Activated naive CD4-positive, alpha-beta T cell treated with anti-CD3 and anti-CD28 coated beads for 36 hours (primary cell): ENCODE measurements at regions of chr11 and their contacts with region 1.

Region 1: GRCh38 chr11:107858217-107859070 is at the start of gene SLC35F2:
- DNase-seq: peak; percentile 77
- H3K4me3 Mint-ChIP-seq: peak within 1 kb of the TSS; percentile 95
- H3K27ac Mint-ChIP-seq: peak within 1 kb of the TSS; percentile 91
- H3K4me1 Mint-ChIP-seq: peaks cover 21% of the 10 kb centered on the region
- H3K27me3 Mint-ChIP-seq: no peaks in the 10 kb centered on the region
- total RNA-seq, gene SLC35F2: 18.2 to 20.5 TPM

Region 2: DNA sequence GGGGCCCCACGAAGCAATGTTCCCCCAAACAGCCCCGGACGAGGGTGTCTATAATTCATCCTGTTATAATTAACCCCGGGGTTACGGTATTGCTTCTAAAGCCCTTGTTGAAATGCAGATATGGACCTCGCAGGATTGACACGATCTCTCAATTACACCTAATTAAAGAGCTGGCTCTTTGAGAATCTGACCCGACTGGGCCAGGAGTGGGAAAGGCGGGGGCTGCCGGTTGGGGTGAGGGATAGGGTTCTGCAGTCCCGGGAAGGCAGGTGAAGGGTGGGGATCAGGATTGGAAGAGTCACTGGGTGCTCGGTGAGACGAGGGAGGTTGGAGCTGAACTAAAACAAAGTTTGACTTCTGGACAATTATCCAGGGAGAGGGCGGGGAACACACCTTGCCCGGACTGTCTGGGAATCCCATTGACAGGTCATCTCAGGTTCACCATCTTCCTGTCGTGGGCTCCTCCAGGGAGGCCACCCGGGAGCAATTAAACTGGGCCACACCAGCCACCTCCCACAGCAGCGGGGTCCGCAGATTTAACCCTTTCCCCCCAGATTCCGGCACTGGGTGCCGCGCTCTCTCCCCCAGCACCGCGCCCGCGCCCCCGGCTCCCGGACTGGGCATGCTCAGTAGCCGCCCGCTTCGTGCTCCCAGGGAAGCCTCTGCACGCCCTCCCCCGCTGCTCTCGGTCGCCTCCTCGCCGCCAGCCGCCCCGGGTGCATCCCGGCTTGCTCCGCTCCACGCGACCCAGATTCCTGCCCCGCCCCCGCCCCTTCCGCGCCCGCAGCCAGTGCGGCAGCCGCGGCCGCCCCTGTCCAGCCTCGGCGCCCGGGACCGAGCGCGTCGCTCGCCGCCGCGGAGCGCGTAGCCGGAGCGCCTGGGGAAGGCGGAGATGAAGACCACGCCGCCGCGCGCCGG is 267.7 kb before region 1 on chr11 and contains the start of gene ELMOD1:
- CTCF ChIA-PET with region 1: no interaction called
- intact Hi-C with region 1: loop called (anchors 2 kb)
- DNase-seq: peak; percentile 57
- H3K4me3 Mint-ChIP-seq: peak within 1 kb of the TSS; percentile 77
- H3K27ac Mint-ChIP-seq: no peak within 1 kb of the TSS
- H3K4me1 Mint-ChIP-seq: peaks cover 22% of the 10 kb centered on the region
- H3K27me3 Mint-ChIP-seq: peaks cover 71% of the 10 kb centered on the region
- total RNA-seq, gene ELMOD1: not detected

Region 3: GRCh38 chr11:107824668-107825369 is 33.6 kb before region 1 on chr11:
- CTCF ChIA-PET with region 1: interaction called, 4 read pairs
- intact Hi-C with region 1: loop called (anchors 2 kb)
- DNase-seq: no peak
- H3K4me3 Mint-ChIP-seq: no peak overlapping the region
- H3K27ac Mint-ChIP-seq: no peak overlapping the region
- H3K4me1 Mint-ChIP-seq: peaks cover 24% of the 10 kb centered on the region
- H3K27me3 Mint-ChIP-seq: no peaks in the 10 kb centered on the region

Region 4: GRCh38 chr11:107928046-107928766 is 69.8 kb after region 1 on chr11 and contains the start of gene RAB39A:
- CTCF ChIA-PET with region 1: no interaction called
- intact Hi-C with region 1: loop called (anchors 5 kb)
- DNase-seq: peak; percentile 83
- H3K4me3 Mint-ChIP-seq: peak within 1 kb of the TSS; percentile 65
- H3K27ac Mint-ChIP-seq: no peak within 1 kb of the TSS
- H3K4me1 Mint-ChIP-seq: peaks cover 12% of the 10 kb centered on the region
- H3K27me3 Mint-ChIP-seq: peaks cover 44% of the 10 kb centered on the region
- total RNA-seq, gene RAB39A: not detected

Region 5: GRCh38 chr11:108084811-108085210 is 226.4 kb after region 1 on chr11:
- CTCF ChIA-PET with region 1: no interaction called
- intact Hi-C with region 1: no loop called
- DNase-seq: no peak
- H3K4me3 Mint-ChIP-seq: no peak overlapping the region
- H3K27ac Mint-ChIP-seq: no peak overlapping the region
- H3K4me1 Mint-ChIP-seq: no peaks in the 10 kb centered on the region
- H3K27me3 Mint-ChIP-seq: no peaks in the 10 kb centered on the region

Region 6: GRCh38 chr11:108664730-108665525 is 806.5 kb after region 1 on chr11 and contains the start of gene DDX10:
- CTCF ChIA-PET with region 1: no interaction called
- intact Hi-C with region 1: loop called (anchors 2 kb)
- DNase-seq: peak; percentile 99
- H3K4me3 Mint-ChIP-seq: peak within 1 kb of the TSS; percentile 99
- H3K27ac Mint-ChIP-seq: peak within 1 kb of the TSS; percentile 86
- H3K4me1 Mint-ChIP-seq: peaks cover 38% of the 10 kb centered on the region
- H3K27me3 Mint-ChIP-seq: no peaks in the 10 kb centered on the region
- total RNA-seq, gene DDX10: 36.6 to 43.0 TPM